PC-3 (cell line): ENCODE measurements at regions of chr12 and their contacts with region 1.

Region 1: DNA sequence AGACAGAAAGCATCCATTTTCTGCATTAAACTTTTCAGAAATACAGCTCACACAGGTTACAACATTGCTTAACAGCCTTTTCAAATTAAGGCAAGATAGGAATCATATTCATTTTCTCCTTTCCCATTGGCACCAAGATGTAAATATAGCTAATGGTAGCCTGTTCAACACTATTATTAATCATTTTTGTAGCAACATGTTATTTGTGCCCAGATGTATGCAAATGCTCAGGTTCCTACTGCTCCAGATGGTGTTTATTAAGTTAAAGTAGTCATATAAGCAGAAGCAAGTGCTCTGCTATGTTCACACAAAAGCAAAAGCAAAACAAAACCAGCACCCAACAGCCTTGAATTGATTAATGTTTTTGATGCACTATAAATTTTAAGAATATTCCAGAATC is 1110.6 kb downstream of the SLC6A15 start:
- DNase-seq: no peak
- ATAC-seq: no peak
- H3K4me3 ChIP-seq: no peak overlapping the region
- H3K27ac ChIP-seq: no peak overlapping the region
- H3K4me1 ChIP-seq: peaks cover 19% of the 10 kb centered on the region
- H3K27me3 ChIP-seq: no peaks in the 10 kb centered on the region
- CTCF ChIP-seq: no peak

Region 2: DNA sequence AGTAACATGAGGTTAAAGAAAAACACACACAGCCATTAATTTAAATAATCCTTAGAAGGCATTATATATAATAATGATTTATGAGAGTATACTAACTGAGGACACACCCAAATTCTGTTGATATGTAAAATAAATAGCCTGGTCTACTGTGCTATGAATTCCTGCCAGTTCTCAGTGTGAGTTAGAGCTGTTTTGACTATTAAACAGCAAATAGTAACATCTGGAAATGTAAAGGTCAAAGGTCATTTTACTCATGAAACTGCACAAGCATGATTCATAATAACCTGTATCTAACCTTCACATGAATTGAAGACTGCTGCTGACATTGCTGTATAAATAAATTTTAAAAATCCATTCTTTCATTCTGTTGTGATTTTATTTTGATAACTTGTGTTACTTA is 143.9 kb after region 1 on chr12:
- CTCF ChIA-PET with region 1: no interaction called
- POLR2A ChIA-PET with region 1: no interaction called
- intact Hi-C with region 1: no loop called
- DNase-seq: peak; percentile 86
- ATAC-seq: peak; percentile 92
- H3K4me3 ChIP-seq: no peak overlapping the region
- H3K27ac ChIP-seq: peak overlapping the region; percentile 30
- H3K4me1 ChIP-seq: peaks cover 20% of the 10 kb centered on the region
- H3K27me3 ChIP-seq: no peaks in the 10 kb centered on the region
- CTCF ChIP-seq: no peak

Region 3: GRCh38 chr12:84131076-84131475 is 329.1 kb after region 1 on chr12:
- CTCF ChIA-PET with region 1: no interaction called
- POLR2A ChIA-PET with region 1: no interaction called
- intact Hi-C with region 1: loop called (anchors 10 kb)
- DNase-seq: peak; percentile 75
- ATAC-seq: peak; percentile 75
- H3K4me3 ChIP-seq: no peak overlapping the region
- H3K27ac ChIP-seq: peak overlapping the region; percentile 11
- H3K4me1 ChIP-seq: peaks cover 34% of the 10 kb centered on the region
- H3K27me3 ChIP-seq: no peaks in the 10 kb centered on the region
- CTCF ChIP-seq: no peak